Activated CD8-positive, alpha-beta T cell treated with anti-CD3 and anti-CD28 coated beads for 36 hours (primary cell): ENCODE measurements at regions of chr16 and their contacts with region 1.

Region 1: GRCh38 chr16:4253394-4254150 is 11.7 kb upstream of the SRL start:
- DNase-seq: peak; percentile 100
- ATAC-seq: peak; percentile 98
- H3K4me3 Mint-ChIP-seq: peak overlapping the region; percentile 96
- H3K27ac Mint-ChIP-seq: peak overlapping the region; percentile 98
- H3K4me1 Mint-ChIP-seq: peaks cover 7% of the 10 kb centered on the region
- H3K27me3 Mint-ChIP-seq: no peaks in the 10 kb centered on the region
- CTCF ChIP-seq: no peak

Region 2: GRCh38 chr16:3983081-3983520 is 270.5 kb before region 1 on chr16:
- CTCF ChIA-PET with region 1: interaction called, 12 read pairs
- POLR2A ChIA-PET with region 1: no interaction called
- intact Hi-C with region 1: no loop called
- DNase-seq: peak; percentile 64
- ATAC-seq: peak; percentile 88
- H3K4me3 Mint-ChIP-seq: no peak overlapping the region
- H3K27ac Mint-ChIP-seq: no peak overlapping the region
- H3K4me1 Mint-ChIP-seq: peaks cover 3% of the 10 kb centered on the region
- H3K27me3 Mint-ChIP-seq: no peaks in the 10 kb centered on the region
- CTCF ChIP-seq: peak; percentile 56

Region 3: GRCh38 chr16:4183237-4184036 is 70.1 kb before region 1 on chr16:
- CTCF ChIA-PET with region 1: interaction called, 12 read pairs
- POLR2A ChIA-PET with region 1: interaction called, 3 read pairs
- intact Hi-C with region 1: no loop called
- DNase-seq: peak; percentile 88
- ATAC-seq: peak; percentile 97
- H3K4me3 Mint-ChIP-seq: peak overlapping the region; percentile 78
- H3K27ac Mint-ChIP-seq: peak overlapping the region; percentile 80
- H3K4me1 Mint-ChIP-seq: peaks cover 7% of the 10 kb centered on the region
- H3K27me3 Mint-ChIP-seq: peaks cover 3% of the 10 kb centered on the region
- CTCF ChIP-seq: no peak

Region 4: DNA sequence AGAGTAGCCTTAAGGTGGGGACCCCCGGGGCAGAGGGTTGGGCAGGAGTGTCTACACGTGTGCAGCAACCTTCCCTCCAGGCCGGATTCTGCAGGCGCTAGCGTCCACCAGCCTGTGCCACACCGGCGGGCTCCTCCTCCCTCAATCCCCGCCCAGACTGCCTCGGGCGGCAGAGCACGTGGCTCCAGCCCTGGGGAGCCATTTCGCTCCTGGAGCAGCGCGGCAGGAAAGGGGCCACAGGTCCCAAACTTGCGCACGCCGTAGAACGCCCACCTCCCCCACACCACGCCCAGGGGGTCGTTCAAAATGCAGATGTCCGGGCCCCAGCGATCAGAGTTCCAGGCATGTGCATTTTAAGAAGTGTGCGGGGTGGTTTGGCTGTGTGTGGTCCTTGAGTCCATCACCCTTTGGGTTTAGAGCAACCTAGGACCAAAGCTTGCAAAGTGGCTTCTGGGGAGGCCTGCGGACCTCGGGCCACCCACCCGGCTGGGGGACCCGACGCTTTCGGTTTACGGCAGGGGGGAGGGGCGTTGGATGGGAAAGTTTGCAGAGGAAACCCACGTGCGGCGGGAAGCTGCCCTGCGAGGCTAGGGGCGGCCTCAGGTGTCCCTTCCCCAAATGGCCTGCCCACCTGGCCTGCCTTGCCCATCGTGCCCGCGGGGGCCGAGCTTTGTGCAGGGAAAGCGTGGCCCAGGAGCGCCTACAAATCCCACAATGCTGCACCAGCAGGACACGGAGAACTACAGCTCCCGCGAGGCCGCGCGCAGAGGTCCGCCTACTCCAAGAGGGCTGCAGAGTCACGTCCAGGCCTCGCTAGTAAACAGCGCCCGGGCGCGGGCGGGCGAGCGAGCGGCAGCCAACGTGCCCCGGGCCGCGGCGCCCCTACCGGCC is 17.8 kb after region 1 on chr16:
- CTCF ChIA-PET with region 1: interaction called, 76 read pairs
- POLR2A ChIA-PET with region 1: interaction called, 78 read pairs
- intact Hi-C with region 1: no loop called
- DNase-seq: peak; percentile 96
- ATAC-seq: peak; percentile 81
- H3K4me3 Mint-ChIP-seq: peak overlapping the region; percentile 86
- H3K27ac Mint-ChIP-seq: peak overlapping the region; percentile 96
- H3K4me1 Mint-ChIP-seq: peaks cover 13% of the 10 kb centered on the region
- H3K27me3 Mint-ChIP-seq: no peaks in the 10 kb centered on the region
- CTCF ChIP-seq: no peak

Region 5: DNA sequence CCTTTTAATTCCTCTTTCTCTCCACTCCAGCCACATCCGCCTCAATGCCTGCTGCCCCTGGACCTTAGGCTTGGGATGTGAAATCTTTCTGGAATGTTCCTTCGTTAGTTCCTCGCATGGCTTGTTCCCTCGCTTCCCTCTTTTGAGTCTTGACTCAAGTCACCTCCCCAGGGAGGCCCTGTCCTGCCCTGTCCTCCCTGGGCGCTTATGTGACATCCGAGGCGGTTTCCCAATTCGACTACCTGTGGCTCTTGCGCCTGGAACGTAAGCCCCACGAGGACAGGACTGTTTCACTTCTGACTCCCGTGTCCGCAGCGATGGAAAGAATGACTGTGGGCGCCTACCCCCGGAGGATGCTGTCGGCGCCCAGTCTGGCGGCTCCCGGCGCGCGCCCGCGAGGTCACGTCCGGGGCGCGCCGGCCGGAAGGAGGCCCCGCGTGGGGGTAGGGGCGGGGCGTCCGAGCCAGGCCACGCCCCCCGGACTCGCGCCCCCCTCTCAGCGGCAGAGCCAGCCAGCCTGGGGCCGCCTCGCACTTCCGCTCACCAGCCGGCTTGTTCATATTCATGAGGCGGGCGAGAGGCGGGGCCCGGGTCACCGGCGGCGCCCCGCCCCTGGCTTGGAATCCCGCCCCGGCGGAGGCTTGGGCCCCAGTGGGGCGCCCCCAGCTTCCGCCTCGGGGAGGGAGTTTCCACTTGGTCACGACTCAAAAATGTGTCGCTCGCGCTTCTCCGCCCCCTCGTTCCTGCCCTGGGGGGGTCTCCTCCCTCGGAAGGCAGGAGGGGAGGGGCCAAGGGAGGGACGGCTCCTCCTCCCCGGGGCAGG is 53.9 kb after region 1 on chr16:
- CTCF ChIA-PET with region 1: interaction called, 9 read pairs
- POLR2A ChIA-PET with region 1: interaction called, 12 read pairs
- intact Hi-C with region 1: no loop called
- DNase-seq: peak; percentile 97
- ATAC-seq: peak; percentile 94
- H3K4me3 Mint-ChIP-seq: peak overlapping the region; percentile 84
- H3K27ac Mint-ChIP-seq: peak overlapping the region; percentile 96
- H3K4me1 Mint-ChIP-seq: peaks cover 29% of the 10 kb centered on the region
- H3K27me3 Mint-ChIP-seq: no peaks in the 10 kb centered on the region
- CTCF ChIP-seq: no peak

Region 6: GRCh38 chr16:4350787-4351659 is 97.5 kb after region 1 on chr16 and contains the start of gene PAM16:
- CTCF ChIA-PET with region 1: interaction called, 16 read pairs
- POLR2A ChIA-PET with region 1: interaction called, 4 read pairs
- intact Hi-C with region 1: no loop called
- DNase-seq: peak; percentile 99
- ATAC-seq: peak; percentile 95
- H3K4me3 Mint-ChIP-seq: peak within 1 kb of the TSS; percentile 96
- H3K27ac Mint-ChIP-seq: peak within 1 kb of the TSS; percentile 95
- H3K4me1 Mint-ChIP-seq: peaks cover 29% of the 10 kb centered on the region
- H3K27me3 Mint-ChIP-seq: no peaks in the 10 kb centered on the region
- CTCF ChIP-seq: no peak
- total RNA-seq, gene PAM16: 65.9 to 70.1 TPM